Activated CD4-positive, alpha-beta T cell treated with anti-CD3 and anti-CD28 coated beads, Interleukin-2, amount 10 ng/mL, durations not matched to agents 7 days and 5 days (primary cell): ENCODE measurements at regions of chr1 and their contacts with region 1.

Region 1: GRCh38 chr1:36187800-36188593 is 32.0 kb downstream of the MAP7D1 start:
- DNase-seq: peak; percentile 88
- H3K4me3 Mint-ChIP-seq: no peak overlapping the region
- H3K27ac Mint-ChIP-seq: peak overlapping the region; percentile 84
- H3K4me1 Mint-ChIP-seq: peaks cover 8% of the 10 kb centered on the region
- H3K27me3 Mint-ChIP-seq: no peaks in the 10 kb centered on the region

Region 2: DNA sequence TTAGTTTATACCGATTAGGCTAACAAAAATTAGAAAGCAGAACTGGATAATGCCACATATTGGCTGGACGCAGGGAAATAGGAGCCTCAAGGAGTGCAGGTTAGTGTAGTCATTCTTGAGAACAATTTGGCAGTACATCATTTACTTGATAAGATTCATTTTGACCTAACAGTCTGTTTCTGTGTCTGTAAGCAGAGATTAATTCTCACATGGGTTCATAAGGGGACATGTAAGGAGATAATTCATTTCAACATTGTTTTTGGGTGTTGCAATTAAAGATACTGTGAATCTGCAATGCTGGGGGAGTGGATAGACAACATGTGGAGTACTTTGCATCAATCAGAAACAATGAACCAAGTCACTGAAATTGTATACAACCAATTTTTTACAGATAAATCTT is 225.0 kb before region 1 on chr1:
- CTCF ChIA-PET with region 1: no interaction called
- POLR2A ChIA-PET with region 1: no interaction called
- DNase-seq: no peak
- H3K4me3 Mint-ChIP-seq: no peak overlapping the region
- H3K27ac Mint-ChIP-seq: no peak overlapping the region
- H3K4me1 Mint-ChIP-seq: no peaks in the 10 kb centered on the region
- H3K27me3 Mint-ChIP-seq: no peaks in the 10 kb centered on the region

Region 3: DNA sequence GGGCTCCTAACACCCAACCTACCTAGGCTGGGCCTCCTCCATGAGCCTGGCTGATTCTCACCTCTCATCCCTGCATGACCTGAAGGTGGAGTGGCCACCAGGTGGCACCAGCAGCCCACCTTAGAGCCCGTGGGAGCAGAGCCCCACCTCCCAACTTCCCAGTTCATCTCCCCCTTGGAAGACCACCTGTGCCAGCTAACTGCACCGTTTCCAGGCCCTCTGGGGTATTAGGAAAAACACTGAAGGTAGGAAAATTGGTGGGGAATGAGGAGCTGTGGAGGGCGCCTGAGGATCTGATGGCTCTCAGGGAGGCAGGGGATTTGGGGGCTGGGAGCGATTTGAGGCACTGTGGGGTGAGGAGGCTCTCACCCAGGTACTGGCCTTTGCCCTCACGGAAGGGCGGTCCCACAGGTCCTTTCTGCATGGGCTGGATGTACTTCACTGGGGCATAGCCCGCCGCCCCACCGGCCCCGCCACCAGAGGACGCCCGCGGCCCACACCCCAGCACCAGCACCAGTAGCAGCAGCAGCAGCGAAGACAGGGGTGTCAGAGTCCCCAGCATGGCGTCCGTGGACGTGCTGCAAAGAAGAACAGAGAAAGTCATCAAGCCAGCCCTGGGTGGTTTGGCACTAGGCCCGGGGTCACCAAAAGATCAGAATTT is 88.2 kb before region 1 on chr1:
- CTCF ChIA-PET with region 1: interaction called, 16 read pairs
- POLR2A ChIA-PET with region 1: no interaction called
- DNase-seq: peak; percentile 81
- H3K4me3 Mint-ChIP-seq: no peak overlapping the region
- H3K27ac Mint-ChIP-seq: no peak overlapping the region
- H3K4me1 Mint-ChIP-seq: peaks cover 3% of the 10 kb centered on the region
- H3K27me3 Mint-ChIP-seq: no peaks in the 10 kb centered on the region

Region 4: GRCh38 chr1:36160949-36161485 is 27.0 kb before region 1 on chr1:
- CTCF ChIA-PET with region 1: interaction called, 20 read pairs
- POLR2A ChIA-PET with region 1: interaction called, 3 read pairs
- DNase-seq: peak; percentile 79
- H3K4me3 Mint-ChIP-seq: peak overlapping the region; percentile 79
- H3K27ac Mint-ChIP-seq: peak overlapping the region; percentile 96
- H3K4me1 Mint-ChIP-seq: peaks cover 70% of the 10 kb centered on the region
- H3K27me3 Mint-ChIP-seq: no peaks in the 10 kb centered on the region

Region 5: GRCh38 chr1:36175137-36176095 is 12.6 kb before region 1 on chr1:
- CTCF ChIA-PET with region 1: interaction called, 13 read pairs
- POLR2A ChIA-PET with region 1: no interaction called
- DNase-seq: no peak
- H3K4me3 Mint-ChIP-seq: no peak overlapping the region
- H3K27ac Mint-ChIP-seq: no peak overlapping the region
- H3K4me1 Mint-ChIP-seq: no peaks in the 10 kb centered on the region
- H3K27me3 Mint-ChIP-seq: no peaks in the 10 kb centered on the region

Region 6: GRCh38 chr1:36198641-36199040 is 10.6 kb after region 1 on chr1:
- CTCF ChIA-PET with region 1: interaction called, 16 read pairs
- POLR2A ChIA-PET with region 1: no interaction called
- DNase-seq: no peak
- H3K4me3 Mint-ChIP-seq: no peak overlapping the region
- H3K27ac Mint-ChIP-seq: no peak overlapping the region
- H3K4me1 Mint-ChIP-seq: peaks cover 5% of the 10 kb centered on the region
- H3K27me3 Mint-ChIP-seq: peaks cover 4% of the 10 kb centered on the region